GM13976 (cell line): ENCODE measurements at regions of chr5 and their contacts with region 1.

Region 1: GRCh38 chr5:56415356-56415765 is 182.2 kb upstream of the ANKRD55 start:
- DNase-seq: peak; percentile 49
- CTCF ChIP-seq: no peak

Region 2: DNA sequence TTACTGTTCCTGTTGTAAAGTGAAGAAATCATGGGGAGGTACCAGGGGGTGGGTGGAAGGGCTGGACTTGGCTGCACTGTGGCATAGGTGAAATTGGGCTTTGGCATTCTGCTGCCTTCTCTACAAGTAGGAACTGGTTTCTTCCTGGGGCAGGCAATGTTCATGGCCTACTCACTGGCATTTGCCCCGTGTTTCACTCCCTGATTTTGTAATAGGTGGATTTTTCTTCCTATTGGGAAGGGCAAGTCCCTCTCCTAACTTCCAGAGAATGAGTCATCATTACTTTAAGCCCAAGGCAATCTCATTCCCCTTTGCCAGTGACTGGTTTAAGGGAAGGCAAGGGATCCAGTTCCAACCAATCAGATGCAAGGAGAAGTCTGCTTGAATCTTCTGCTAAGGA is 114.3 kb before region 1 on chr5:
- in situ Hi-C with region 1: no loop called
- DNase-seq: no peak
- CTCF ChIP-seq: no peak

Region 3: DNA sequence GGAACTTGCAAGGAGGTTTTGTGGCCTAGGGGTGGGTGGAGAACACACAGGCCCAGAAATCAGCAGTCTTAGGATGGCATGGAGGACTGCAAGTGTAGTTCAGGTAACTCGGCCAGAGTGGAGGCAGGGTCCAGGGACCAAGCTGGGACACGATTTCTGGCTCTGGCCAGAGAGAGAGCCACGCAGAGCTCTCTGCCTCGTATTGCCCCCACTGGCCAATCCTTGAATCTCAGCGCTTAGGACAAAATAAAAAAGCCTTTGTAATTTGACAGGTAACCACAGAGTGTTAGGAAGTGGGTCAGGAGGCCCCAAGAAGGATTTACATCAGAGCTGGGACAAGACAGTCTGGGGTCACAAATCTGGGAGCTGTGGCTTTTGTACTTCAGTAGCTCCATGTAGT is 411.7 kb after region 1 on chr5:
- in situ Hi-C with region 1: loop called (anchors 10 kb)
- DNase-seq: no peak
- CTCF ChIP-seq: no peak